Activated CD8-positive, alpha-beta T cell treated with anti-CD3 and anti-CD28 coated beads for 36 hours (primary cell): ENCODE measurements at regions of chr12 and their contacts with region 1.

Region 1: DNA sequence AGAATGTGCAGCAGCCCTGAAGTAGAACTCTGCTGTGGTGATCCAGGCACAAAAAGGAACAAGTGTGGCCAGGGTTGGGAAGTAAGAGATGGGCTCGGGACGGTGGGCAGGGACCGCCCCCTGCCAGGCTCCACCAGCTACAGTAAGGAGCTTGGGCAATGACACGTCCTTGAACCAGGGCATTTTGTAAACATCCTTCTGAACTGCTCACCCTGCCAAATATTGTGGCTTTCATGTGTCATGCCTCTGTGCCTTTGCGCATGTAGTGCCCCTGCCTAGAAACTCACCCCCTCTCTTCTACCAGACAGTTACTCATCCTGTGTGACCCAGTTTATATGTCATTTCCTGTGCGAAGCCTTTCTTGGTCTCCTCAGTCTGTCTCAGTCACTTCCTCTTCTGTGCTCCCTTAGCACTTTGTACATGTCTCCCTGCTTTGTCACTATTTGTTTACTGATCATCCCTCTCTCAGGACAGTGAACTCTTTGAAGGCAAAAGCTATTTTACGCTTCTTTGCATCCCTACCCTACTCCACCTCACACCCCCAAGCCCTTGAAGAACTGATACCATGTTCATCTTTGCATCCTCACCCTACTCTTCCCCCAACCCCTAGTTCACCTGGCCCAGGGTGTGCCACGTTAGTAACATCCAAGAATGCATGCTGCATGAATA is 108.9 kb upstream of the PLEKHG7 start:
- DNase-seq: peak; percentile 86
- ATAC-seq: peak; percentile 97
- H3K4me3 Mint-ChIP-seq: peak overlapping the region; percentile 46
- H3K27ac Mint-ChIP-seq: peak overlapping the region; percentile 99
- H3K4me1 Mint-ChIP-seq: peaks cover 59% of the 10 kb centered on the region
- H3K27me3 Mint-ChIP-seq: no peaks in the 10 kb centered on the region
- CTCF ChIP-seq: no peak

Region 2: DNA sequence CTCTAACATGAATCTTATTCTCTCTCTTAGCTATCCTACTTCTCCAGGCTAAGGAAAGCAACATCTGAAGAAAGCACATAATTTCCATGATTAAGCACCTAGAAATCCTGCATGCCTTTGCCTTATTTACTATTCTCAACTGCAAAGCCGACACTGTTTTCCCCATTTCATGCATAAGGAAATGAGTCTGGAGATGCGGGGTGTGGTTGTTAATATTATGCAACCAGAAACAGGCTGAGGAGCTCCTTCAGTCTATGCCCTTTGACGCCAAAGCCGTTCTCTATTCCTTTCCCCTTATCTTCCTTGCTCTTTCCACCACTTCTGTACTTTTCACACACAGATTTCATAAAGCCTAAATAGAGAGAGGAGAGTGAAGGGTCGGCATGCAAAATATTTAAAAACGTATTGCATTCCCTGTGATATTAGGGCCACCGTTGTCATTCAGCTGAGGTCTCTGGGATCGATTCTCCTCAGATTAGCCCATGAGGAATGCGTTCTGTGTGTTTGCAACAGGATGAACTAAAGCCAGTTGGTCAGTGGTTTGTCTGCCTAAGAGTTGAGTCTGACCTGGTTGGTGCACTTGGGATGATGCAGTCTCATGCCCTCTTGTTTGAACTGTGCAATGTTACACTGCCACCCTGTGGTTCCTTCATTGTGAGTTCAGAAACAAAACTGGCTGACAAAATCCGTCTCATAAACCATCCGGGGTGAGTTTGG is 55.8 kb after region 1 on chr12:
- CTCF ChIA-PET with region 1: interaction called, 5 read pairs
- POLR2A ChIA-PET with region 1: no interaction called
- intact Hi-C with region 1: loop called (anchors 5 kb)
- DNase-seq: peak; percentile 71
- ATAC-seq: peak; percentile 81
- H3K4me3 Mint-ChIP-seq: no peak overlapping the region
- H3K27ac Mint-ChIP-seq: no peak overlapping the region
- H3K4me1 Mint-ChIP-seq: peaks cover 8% of the 10 kb centered on the region
- H3K27me3 Mint-ChIP-seq: no peaks in the 10 kb centered on the region
- CTCF ChIP-seq: peak; percentile 66